ENCODE measurements at regions of chr2 and their contacts with region 1.

Region 1: GRCh38 chr2:170873035-170873692 is 55.9 kb upstream of the GORASP2 start:
- DNase-seq: peak; percentile 63 to 73 (median 72)
- H3K4me3 ChIP-seq: peak overlapping the region in 5 of 7 experiments; percentile 16 to 66 (median 56)
- H3K27ac ChIP-seq: no peak overlapping the region
- H3K4me1 ChIP-seq: peaks cover 0 to 11% (median 2%) of the 10 kb centered on the region in 4 experiments
- H3K27me3 ChIP-seq: no peaks in the 10 kb centered on the region

Region 2: GRCh38 chr2:170665743-170666142 is 207.4 kb before region 1 on chr2:
- CTCF ChIA-PET with region 1: no interaction called
- POLR2A ChIA-PET with region 1: no interaction called
- DNase-seq: no peak
- H3K4me3 ChIP-seq: no peak overlapping the region
- H3K27ac ChIP-seq: no peak overlapping the region
- H3K4me1 ChIP-seq: no peaks in the 10 kb centered on the region
- H3K27me3 ChIP-seq: no peaks in the 10 kb centered on the region

Region 3: DNA sequence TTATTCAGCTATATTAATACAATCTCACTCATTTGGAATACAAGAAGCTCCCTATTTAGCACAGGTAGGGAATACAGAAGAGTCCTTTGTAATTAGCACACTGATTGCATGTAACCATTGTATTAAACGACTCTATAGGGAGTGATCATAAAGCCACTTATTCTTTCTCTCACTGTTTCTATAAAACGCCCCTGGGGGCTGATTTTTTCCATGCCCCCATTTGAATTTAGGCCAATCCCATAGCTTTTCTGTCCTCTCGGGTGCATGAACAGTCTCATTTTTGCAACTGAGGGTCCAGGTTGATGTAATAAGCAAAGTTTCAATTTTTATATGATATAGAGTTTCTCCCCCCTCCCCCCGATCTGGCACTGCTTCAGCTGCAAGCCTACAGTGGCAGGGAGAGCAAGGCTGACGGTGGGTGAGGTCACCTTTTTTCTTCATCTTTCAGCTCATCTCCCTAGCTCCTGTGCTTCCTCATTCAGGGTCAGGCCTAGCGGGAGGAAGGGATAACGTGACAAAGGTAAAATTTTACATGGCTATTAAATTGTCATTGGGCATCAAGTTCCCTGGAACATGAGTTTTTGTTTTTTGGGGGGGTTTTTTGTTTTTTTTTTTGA is 10.8 kb before region 1 on chr2:
- CTCF ChIA-PET with region 1: interaction called, 14 read pairs
- POLR2A ChIA-PET with region 1: no interaction called
- DNase-seq: peak in 1 of 3 donors; percentile 46
- H3K4me3 ChIP-seq: no peak overlapping the region
- H3K27ac ChIP-seq: no peak overlapping the region
- H3K4me1 ChIP-seq: no peaks in the 10 kb centered on the region
- H3K27me3 ChIP-seq: peaks cover 0 to 3% (median 0%) of the 10 kb centered on the region in 5 experiments

Region 4: DNA sequence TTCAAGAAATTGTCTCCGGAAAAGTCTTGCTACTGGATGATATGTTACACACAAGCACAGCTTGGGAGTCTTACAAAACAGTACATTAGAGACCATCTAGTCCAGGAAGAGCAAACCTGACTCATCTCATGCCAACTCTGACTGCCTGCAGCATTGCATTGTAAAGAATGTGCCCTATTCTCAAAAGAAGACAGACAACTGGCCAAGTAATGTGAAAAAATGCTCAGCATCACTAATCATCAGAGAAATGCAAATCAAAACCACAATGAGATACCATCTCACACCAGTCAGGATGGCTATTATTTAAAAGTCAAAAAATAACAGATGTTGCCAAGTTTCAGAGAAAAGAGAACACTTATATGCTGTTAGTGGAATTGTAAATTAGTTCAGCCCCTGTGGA is 13.2 kb after region 1 on chr2:
- CTCF ChIA-PET with region 1: interaction called, 17 read pairs
- POLR2A ChIA-PET with region 1: no interaction called
- DNase-seq: peak in 1 of 3 donors; percentile 10
- H3K4me3 ChIP-seq: no peak overlapping the region
- H3K27ac ChIP-seq: no peak overlapping the region
- H3K4me1 ChIP-seq: no peaks in the 10 kb centered on the region
- H3K27me3 ChIP-seq: no peaks in the 10 kb centered on the region

Region 5: GRCh38 chr2:170922634-170923494 is 49.7 kb after region 1 on chr2:
- CTCF ChIA-PET with region 1: no interaction called
- POLR2A ChIA-PET with region 1: no interaction called
- DNase-seq: peak in 2 of 3 donors; percentile 49 to 56
- H3K4me3 ChIP-seq: no peak overlapping the region
- H3K27ac ChIP-seq: no peak overlapping the region
- H3K4me1 ChIP-seq: peaks cover 0 to 2% (median under 1%) of the 10 kb centered on the region in 4 experiments
- H3K27me3 ChIP-seq: no peaks in the 10 kb centered on the region

Measured in common myeloid progenitor, CD34-positive (primary cell).